Activated T-helper 1 cell treated with anti-CD3 and anti-CD28 coated beads, Interleukin-12 subunit alpha, Interleukin-12 subunit beta, Interleukin-2, Interleukin-4 antibody, amounts not matched to agents 30 ng/mL and 10 ng/mL and 1 ng/mL, durations not matched to agents 14 hours and 24 hours and 36 hours (primary cell): ENCODE measurements at regions of chr2 and their contacts with region 1.

Region 1: DNA sequence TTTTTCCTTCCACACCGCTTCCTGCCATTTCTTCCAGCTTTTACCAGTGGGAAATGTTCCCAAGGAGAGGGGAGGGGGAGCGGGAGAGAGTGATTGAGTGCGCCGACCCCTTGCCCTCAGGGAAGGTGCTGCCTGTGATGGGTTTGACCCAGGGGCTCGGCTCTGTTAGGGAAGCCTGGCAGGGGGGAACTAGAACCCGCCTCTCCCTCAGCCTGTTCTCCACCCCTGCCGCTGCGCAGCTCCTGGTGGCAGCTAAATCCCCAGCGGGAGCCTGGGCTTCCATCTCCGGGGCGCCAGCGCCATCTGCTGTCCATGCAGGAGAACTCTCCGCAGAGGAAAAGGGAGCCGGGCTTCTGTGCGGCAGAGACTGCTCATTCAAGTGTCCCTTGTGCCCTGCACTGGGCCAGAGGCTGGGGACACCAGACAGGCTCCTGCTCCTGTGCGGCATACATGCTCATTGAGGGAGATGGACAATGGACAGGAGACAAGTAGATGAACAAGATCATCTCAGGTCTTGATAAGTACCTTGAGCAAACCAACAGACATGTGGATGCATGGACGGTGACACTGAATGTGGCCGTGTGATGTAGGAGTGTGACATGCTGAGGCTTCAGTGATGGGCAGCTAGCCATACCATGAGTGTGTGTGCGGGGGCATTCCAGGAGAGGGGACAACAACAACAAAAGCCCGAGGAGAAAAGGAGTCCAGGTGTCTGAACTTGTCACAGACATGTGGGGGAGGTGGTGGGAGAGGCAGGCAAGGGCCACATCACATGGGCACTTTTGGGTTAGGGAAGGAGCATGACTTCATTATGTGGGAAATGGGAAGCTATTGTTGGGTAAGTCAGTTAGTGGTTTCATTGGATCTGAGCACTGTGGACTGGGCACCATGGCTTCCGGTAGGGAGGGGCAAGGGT is 13.3 kb downstream of the CHPF start:
- DNase-seq: peak; percentile 74
- H3K4me3 Mint-ChIP-seq: no peak overlapping the region
- H3K27ac Mint-ChIP-seq: no peak overlapping the region
- H3K4me1 Mint-ChIP-seq: peaks cover 6% of the 10 kb centered on the region
- H3K27me3 Mint-ChIP-seq: peaks cover 41% of the 10 kb centered on the region

Region 2: DNA sequence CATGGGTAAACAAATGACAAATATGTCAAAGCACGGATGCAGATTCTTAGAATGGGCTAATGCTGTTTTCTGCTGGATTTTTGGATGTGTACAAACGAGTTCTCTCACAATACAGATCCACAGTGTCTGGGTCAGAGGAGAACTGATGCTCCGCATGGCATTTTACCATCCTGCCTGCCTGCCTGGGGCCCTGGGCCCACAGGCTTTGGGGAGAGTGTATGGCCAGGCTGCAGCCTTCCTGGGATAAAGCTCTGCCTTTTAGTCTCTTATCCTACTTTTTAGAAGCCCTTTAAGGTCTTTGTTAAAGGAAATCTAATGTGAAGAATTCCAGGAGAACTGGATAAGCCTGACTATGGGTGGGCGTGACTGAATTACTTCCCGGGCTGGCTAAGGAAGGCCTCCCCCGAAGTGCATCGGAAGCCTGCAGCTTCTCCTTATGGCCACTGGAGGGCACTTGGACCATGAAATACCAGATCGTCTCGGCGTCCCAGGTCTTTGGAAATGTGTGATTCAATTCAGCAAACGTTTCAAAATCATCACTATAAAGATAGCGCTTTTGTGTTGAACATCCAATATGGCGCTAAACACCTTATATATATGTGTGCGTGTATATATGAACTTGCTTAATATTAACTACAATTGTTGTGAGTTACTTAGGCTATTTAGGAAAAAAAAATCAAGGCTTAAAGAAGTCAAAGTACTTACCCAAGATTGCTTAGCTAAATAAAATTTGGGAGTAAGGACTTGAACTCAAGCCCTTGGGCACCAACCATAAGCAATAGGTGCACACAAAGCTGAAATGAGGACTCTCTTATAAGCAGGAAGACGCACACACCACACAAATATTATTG is 127.4 kb before region 1 on chr2:
- intact Hi-C with region 1: loop called (anchors 1 kb)
- DNase-seq: peak; percentile 45
- H3K4me3 Mint-ChIP-seq: no peak overlapping the region
- H3K27ac Mint-ChIP-seq: no peak overlapping the region
- H3K4me1 Mint-ChIP-seq: no peaks in the 10 kb centered on the region
- H3K27me3 Mint-ChIP-seq: peaks cover 14% of the 10 kb centered on the region

Region 3: GRCh38 chr2:219459460-219460311 is 70.6 kb before region 1 on chr2:
- intact Hi-C with region 1: loop called (anchors 1 kb)
- DNase-seq: no peak
- H3K4me3 Mint-ChIP-seq: no peak overlapping the region
- H3K27ac Mint-ChIP-seq: no peak overlapping the region
- H3K4me1 Mint-ChIP-seq: no peaks in the 10 kb centered on the region
- H3K27me3 Mint-ChIP-seq: peaks cover 4% of the 10 kb centered on the region

Region 4: DNA sequence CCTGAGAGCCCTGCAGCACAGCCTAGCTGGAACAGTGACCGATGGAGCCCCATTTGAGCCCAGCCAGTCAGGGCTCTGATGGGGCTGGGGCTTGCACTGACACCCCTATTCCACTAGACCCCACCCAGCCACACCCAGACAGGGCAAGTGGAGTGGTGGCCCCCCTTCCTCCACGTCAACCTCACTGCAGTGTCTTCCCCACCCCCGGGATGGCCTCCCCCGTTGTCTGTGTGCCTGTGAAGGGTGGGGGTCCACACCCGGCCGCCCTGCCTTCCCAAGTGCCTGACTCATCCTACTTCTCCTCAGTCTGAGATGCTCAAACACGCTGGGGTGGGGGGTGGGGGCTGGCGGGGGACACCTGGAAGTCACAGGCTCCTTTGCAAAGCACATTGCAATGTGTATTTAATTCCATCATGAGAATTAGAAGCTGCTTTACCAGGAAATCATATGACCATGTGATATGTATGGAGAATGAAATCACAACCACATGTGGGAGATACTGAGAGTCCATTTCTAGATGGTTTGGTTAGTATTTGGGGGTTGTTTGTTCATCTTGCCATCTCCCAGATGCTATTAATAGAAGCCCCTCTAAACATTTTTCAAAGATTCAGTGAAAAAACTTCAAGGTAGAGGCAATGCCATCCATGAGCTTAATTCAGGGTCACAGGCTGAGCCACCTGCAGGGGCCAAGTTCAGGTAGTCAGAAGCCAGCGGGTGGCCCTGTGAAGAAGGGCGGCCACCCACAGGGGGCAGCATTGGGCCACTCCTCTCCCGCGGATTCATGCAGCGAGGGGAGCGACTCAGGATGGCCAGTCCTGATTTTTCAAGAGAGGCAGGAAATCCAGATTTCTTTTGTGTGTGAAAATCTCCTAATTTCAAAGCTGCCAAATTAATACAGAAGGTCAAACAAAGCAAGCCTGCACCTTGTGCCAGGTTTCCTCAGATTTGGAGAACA is 54.3 kb before region 1 on chr2:
- intact Hi-C with region 1: loop called (anchors 1 kb)
- DNase-seq: peak; percentile 35
- H3K4me3 Mint-ChIP-seq: no peak overlapping the region
- H3K27ac Mint-ChIP-seq: no peak overlapping the region
- H3K4me1 Mint-ChIP-seq: no peaks in the 10 kb centered on the region
- H3K27me3 Mint-ChIP-seq: peaks cover 12% of the 10 kb centered on the region

Region 5: GRCh38 chr2:219509780-219510511 is 20.4 kb before region 1 on chr2:
- intact Hi-C with region 1: loop called (anchors 1 kb)
- DNase-seq: peak; percentile 12
- H3K4me3 Mint-ChIP-seq: no peak overlapping the region
- H3K27ac Mint-ChIP-seq: no peak overlapping the region
- H3K4me1 Mint-ChIP-seq: peaks cover 10% of the 10 kb centered on the region
- H3K27me3 Mint-ChIP-seq: peaks cover 43% of the 10 kb centered on the region